Transverse colon (tissue), 4 donors: ENCODE measurements at regions of chr5 and their contacts with region 1.

Region 1: GRCh38 chr5:172744123-172745104 is 26.6 kb downstream of the DUSP1 start:
- DNase-seq: peak; percentile 74
- H3K4me3 ChIP-seq: no peak overlapping the region
- H3K27ac ChIP-seq: peak overlapping the region in 3 of 4 donors; percentile 1 to 83 (median 81)
- H3K4me1 ChIP-seq: peaks cover 4 to 25% (median 18%) of the 10 kb centered on the region in 4 donors
- H3K27me3 ChIP-seq: no peaks in the 10 kb centered on the region
- CTCF ChIP-seq: no peak
- EP300 ChIP-seq: no peak
- POLR2A ChIP-seq: no peak

Region 2: DNA sequence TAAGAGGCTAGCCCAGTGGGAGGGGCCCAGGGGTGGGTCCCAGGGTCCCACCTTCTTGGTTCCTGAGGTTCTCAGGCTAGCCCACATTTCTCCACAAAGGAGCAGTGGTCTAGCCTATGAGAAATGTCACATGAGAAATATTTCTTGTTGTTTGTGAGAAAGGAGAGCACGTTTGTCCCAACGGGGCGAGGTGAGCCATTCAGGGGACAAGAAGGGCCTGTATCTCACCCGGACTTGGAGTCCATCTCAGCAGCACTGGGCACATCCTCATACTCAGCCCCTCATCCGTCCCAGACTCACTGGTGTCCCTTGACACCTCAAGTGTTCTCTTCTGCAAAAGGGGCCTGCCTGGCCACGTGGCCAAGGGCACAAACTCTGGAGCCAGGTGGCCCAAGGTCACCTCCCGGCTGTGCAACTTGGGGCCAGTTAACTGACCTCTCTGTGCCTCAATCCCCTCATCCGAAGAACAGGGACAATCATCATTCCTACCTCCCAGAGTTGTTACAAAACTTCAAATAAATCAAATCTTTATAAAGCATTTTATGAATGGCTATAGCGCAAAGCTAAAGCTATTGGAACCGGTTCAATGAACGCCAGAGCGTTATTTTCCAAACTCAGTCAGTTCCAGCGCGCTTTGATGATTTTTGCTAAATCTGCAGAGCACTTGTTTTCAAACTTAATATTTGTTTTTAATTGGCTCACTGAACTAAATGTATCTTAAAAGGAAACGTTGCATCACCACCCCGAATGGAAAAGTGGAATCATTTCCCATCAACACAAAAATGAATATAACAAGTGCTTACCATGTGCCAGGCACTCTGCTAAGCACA is 22.9 kb before region 1 on chr5:
- in situ Hi-C with region 1: no loop called
- intact Hi-C with region 1: loop called (anchors 1 kb)
- DNase-seq: no peak
- H3K4me3 ChIP-seq: no peak overlapping the region
- H3K27ac ChIP-seq: peak overlapping the region in 1 of 4 donors; percentile 44
- H3K4me1 ChIP-seq: peaks cover 6 to 16% (median 9%) of the 10 kb centered on the region in 4 donors
- H3K27me3 ChIP-seq: no peaks in the 10 kb centered on the region
- CTCF ChIP-seq: no peak
- EP300 ChIP-seq: peak; percentile 56
- POLR2A ChIP-seq: no peak

Region 3: DNA sequence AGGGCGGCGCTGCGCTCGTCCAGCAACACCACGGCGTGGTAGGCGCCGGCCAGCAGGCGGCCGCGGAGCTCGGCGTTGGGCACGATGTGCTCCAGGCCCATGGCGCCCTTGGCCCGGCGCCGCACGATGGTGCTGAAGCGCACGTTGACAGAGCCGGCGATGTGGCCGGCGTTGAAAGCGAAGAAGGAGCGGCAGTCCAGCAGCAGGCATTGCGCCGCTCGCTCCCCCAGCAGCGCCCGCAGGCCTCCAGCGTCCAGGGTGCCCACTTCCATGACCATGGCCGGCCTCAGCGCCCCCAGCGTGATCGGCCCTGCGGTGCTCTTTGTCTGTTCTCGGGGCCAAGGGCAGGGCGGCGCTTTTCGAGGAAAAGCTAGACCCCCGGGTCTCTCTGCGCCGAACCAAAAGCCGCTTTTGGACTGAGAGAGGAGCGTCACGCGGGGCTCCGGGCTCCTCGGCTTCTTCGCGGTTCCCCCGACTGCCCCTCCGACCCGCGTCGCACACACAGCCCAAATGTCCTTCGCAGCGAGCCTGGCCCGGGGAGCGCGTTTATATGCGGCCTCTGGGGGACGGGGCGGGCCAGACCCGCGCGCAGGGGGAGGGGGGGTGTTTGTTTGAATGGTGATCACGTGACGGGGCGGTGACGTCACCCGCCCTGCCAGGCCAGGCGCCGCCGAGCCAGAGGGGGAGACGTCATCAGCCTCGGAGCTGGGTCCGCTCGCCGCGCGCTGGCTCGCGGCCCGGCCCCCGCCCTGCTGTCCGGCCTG is 26.4 kb after region 1 on chr5 and contains the start of gene DUSP1:
- in situ Hi-C with region 1: no loop called
- intact Hi-C with region 1: no loop called
- DNase-seq: peak; percentile 99
- H3K4me3 ChIP-seq: peak within 1 kb of the TSS; percentile 81 to 98 (median 82)
- H3K27ac ChIP-seq: peak within 1 kb of the TSS; percentile 99 to 100 (median 100)
- H3K4me1 ChIP-seq: peaks cover 24 to 75% (median 54%) of the 10 kb centered on the region in 4 donors
- H3K27me3 ChIP-seq: no peaks in the 10 kb centered on the region
- CTCF ChIP-seq: peak; percentile 32 to 80 (median 56)
- EP300 ChIP-seq: peak; percentile 59
- POLR2A ChIP-seq: peak; percentile 100
- total RNA-seq, gene DUSP1: 469 to 701 (median 567) TPM

Region 4: GRCh38 chr5:173108914-173109313 is 364.5 kb after region 1 on chr5:
- in situ Hi-C with region 1: no loop called
- intact Hi-C with region 1: no loop called
- DNase-seq: no peak
- H3K4me3 ChIP-seq: no peak overlapping the region
- H3K27ac ChIP-seq: no peak overlapping the region
- H3K4me1 ChIP-seq: peaks cover 0 to 10% (median 2%) of the 10 kb centered on the region in 4 donors
- H3K27me3 ChIP-seq: no peaks in the 10 kb centered on the region
- CTCF ChIP-seq: no peak
- EP300 ChIP-seq: no peak
- POLR2A ChIP-seq: no peak